CD4-positive, alpha-beta memory T cell (primary cell): ENCODE measurements at regions of chr11 and their contacts with region 1.

Region 1: DNA sequence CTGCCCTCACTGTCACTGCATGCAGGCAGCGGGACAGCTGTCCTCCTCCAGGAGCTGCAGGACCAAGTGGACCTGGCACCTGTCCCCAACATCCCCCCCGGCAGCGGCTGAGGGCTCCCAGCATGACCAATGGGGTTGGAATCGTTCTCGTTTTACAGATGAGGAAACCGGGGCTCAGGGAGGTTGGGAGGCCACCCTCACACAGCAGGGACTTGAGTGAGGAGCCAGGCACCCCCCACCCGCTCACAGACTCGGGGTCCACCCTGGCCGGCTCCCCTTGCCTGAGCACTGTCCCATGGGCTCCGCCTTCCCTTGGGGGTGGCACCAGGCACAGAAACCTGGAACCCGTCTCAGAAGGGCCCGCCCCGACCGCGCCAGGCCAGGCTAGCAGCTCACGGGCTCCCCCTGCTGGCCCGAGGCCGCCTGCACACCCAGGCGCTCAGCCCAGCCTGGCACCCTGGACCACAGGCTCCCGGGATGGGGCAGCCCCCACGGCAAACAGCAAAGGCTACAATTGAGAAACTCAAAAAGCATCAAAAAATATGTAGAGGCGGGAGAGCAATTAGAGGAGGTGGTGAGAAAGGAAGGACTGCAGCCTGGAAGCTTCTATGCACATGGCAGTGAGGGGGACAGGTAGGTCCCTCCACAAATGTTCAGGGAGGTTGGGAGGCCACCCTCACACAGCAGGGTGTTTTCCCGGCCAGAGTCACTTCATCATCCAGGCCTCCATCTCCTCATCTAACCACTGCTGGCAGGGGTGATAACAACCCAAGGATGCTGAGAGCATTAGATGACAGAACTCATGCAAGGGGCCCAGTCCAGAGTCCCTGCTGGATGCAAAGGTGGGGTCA is 12.8 kb downstream of the MACROD1 start:
- DNase-seq: peak; percentile 56 to 69 (median 63)
- H3K4me3 ChIP-seq: no peak overlapping the region
- H3K4me3 Mint-ChIP-seq: peak overlapping the region in 1 of 8 donors; percentile 26
- H3K27ac ChIP-seq: no peak overlapping the region
- H3K27ac Mint-ChIP-seq: no peak overlapping the region
- H3K4me1 ChIP-seq: no peaks in the 10 kb centered on the region
- H3K4me1 Mint-ChIP-seq: peaks cover 0 to 6% (median under 1%) of the 10 kb centered on the region in 4 donors
- H3K27me3 ChIP-seq: no peaks in the 10 kb centered on the region
- H3K27me3 Mint-ChIP-seq: no peaks in the 10 kb centered on the region

Region 2: GRCh38 chr11:63768237-63769043 is 384.6 kb before region 1 on chr11 and contains the start of gene ZFTA:
- CTCF ChIA-PET with region 1: interaction called, 9 read pairs
- POLR2A ChIA-PET with region 1: no interaction called
- intact Hi-C with region 1: loop called (anchors 1 kb)
- DNase-seq: peak; percentile 43 to 57 (median 49)
- H3K4me3 ChIP-seq: peak within 1 kb of the TSS; percentile 83 to 94
- H3K4me3 Mint-ChIP-seq: peak within 1 kb of the TSS; percentile 87 to 100 (median 94)
- H3K27ac ChIP-seq: peak within 1 kb of the TSS; percentile 8
- H3K27ac Mint-ChIP-seq: peak within 1 kb of the TSS; percentile 69 to 94 (median 83)
- H3K4me1 ChIP-seq: peaks cover 13% of the 10 kb centered on the region
- H3K4me1 Mint-ChIP-seq: peaks cover 3 to 18% (median 7%) of the 10 kb centered on the region in 4 donors
- H3K27me3 ChIP-seq: peaks cover 6% of the 10 kb centered on the region
- H3K27me3 Mint-ChIP-seq: peaks cover 4 to 14% of the 10 kb centered on the region in 2 donors
- total RNA-seq, gene ZFTA: 1.4 to 1.7 TPM

Region 3: DNA sequence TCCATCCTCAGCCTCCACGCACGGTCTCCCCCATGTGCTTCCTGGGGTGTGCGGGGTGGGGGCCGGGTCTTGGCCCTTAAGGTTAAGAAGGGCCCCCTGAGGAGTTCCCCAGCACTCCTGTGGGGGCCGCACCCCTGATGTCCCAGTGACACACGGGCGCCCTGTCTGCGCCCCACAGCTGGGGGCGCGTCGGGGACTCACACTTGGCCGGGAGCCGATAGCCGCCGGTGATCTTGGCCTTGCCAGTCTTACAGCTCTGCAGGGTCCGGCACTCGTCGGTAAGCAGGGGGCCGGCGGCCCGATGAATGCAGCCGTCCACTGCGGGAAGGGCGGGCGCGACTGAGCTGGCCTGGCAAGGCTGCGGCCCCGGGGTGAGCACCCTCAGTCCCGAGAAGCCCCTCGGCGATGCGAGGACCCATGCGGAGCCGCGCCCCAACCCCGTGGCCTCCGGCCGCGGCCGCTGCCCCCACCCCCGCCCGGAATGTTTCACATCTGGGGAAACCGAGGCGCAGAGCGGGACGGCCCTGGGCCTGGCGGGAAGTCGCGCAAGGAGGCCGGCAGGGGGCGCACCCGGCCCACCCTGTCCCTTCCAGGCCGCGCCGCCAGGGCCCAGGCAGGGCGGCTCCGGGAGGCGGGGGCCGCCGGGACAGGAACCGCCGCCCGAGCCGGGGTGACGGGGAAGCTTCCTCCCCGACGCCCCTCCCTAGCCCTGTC is 152.9 kb before region 1 on chr11:
- CTCF ChIA-PET with region 1: interaction called, 114 read pairs
- POLR2A ChIA-PET with region 1: interaction called, 10 read pairs
- intact Hi-C with region 1: loop called (anchors 1 kb)
- DNase-seq: peak; percentile 66 to 79 (median 76)
- H3K4me3 ChIP-seq: peak overlapping the region in 1 of 2 donors; percentile 28
- H3K4me3 Mint-ChIP-seq: peak overlapping the region in 6 of 8 donors; percentile 21 to 76 (median 50)
- H3K27ac ChIP-seq: no peak overlapping the region
- H3K27ac Mint-ChIP-seq: no peak overlapping the region
- H3K4me1 ChIP-seq: peaks cover 8% of the 10 kb centered on the region
- H3K4me1 Mint-ChIP-seq: peaks cover 0 to 5% (median 3%) of the 10 kb centered on the region in 4 donors
- H3K27me3 ChIP-seq: no peaks in the 10 kb centered on the region
- H3K27me3 Mint-ChIP-seq: no peaks in the 10 kb centered on the region

Region 4: DNA sequence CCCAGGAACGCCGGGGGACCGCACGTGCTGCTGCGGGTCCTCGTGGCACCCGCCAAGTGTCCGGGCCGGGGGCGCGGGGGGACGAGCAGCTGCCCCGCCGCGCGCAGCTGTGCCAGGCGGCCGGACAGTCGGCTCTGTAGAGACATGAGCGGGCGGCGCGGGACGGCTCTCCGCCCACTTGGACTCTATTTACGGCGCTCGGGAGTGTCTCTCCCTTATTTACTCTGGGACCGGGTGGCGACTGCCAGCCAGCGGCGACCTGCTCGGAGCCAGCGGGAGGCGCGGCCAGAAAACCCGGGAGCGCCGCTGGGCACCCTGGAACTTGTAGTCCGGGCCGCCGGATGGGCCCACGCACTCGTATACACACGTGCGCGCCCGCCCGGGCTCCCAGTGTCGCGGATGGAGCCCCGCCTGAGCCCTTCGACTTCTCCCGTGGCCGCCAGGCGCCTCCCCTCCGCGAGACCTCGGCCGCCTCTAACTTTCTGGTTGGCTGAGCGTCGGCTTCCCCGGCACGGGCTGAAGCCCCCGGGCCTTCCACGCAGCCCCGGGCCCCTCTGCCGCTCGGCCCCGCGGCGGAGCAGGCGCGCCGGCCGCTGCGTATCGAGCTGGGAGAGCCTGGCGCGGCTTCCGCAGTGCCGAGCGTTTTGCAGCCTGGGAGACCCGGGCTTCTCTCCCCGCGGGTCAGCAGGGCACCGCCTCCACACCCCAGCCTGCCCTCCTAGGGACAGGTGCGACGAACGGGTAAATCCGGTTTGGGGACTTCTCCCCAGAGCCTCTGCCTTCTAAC is 13.0 kb after region 1 on chr11 and contains the start of gene MACROD1:
- CTCF ChIA-PET with region 1: interaction called, 16 read pairs
- POLR2A ChIA-PET with region 1: no interaction called
- intact Hi-C with region 1: no loop called
- DNase-seq: peak; percentile 63 to 76 (median 69)
- H3K4me3 ChIP-seq: peak within 1 kb of the TSS; percentile 47 to 62
- H3K4me3 Mint-ChIP-seq: peak within 1 kb of the TSS; percentile 84 to 93 (median 91)
- H3K27ac ChIP-seq: peak within 1 kb of the TSS; percentile 55
- H3K27ac Mint-ChIP-seq: peak within 1 kb of the TSS in 6 of 7 donors; percentile 74 to 89 (median 82)
- H3K4me1 ChIP-seq: peaks cover 11% of the 10 kb centered on the region
- H3K4me1 Mint-ChIP-seq: peaks cover 4 to 15% (median 6%) of the 10 kb centered on the region in 4 donors
- H3K27me3 ChIP-seq: no peaks in the 10 kb centered on the region
- H3K27me3 Mint-ChIP-seq: no peaks in the 10 kb centered on the region
- total RNA-seq, gene MACROD1: 8.1 to 8.7 TPM